ENCODE measurements at regions of chr14 and their contacts with region 1.

Region 1: GRCh38 chr14:101475456-101476257 is 85.6 kb upstream of the DIO3 start:
- DNase-seq: peak; percentile 61
- H3K4me3 ChIP-seq: no peak overlapping the region
- H3K27ac ChIP-seq: peak overlapping the region; percentile 83 to 86
- H3K4me1 ChIP-seq: peaks cover 24% of the 10 kb centered on the region
- H3K27me3 ChIP-seq: no peaks in the 10 kb centered on the region
- CTCF ChIP-seq: no peak
- POLR2A ChIP-seq: no peak

Region 2: DNA sequence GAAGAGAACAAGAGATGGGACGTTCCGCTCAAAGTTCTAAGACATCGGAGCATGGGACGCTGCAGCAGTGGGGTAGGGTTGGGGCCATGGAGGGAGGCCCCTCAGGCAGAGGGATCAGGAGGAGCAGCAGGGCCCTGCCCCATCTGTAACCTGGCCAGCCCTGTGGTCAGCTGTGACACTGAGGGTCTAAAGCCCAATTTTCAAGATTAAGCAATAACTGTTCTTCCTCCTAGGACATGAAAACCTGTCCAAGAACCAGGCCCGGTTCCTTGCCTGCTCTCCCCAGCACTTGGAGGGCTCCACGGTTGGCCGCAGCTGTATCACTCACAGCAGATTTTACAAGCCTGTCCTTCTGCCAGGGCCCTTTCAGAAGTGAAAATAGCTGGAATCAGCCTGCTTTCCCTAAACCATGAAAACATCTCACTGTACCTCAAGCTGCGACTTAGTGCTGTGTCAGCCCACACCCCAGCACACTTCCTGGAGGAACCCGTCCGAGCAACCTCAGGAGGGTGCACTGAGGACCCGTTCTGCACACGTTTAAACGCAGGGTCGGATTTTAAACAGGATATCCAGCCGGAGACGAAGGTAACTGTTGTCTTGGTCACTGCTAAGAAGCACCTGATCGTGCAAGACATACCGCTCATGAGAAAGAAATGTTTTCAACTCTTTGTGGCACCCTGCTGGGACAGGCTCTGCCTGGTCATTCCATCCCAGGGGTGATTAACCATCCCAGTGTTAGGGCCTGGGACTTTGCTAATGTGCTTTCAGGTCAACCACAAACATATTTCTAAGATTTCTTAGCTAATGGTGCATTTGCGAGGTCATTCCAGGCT is 116.2 kb before region 1 on chr14:
- intact Hi-C with region 1: loop called (anchors 10 kb)
- DNase-seq: peak; percentile 78
- H3K4me3 ChIP-seq: no peak overlapping the region
- H3K27ac ChIP-seq: peak overlapping the region; percentile 63 to 67
- H3K4me1 ChIP-seq: peaks cover 37% of the 10 kb centered on the region
- H3K27me3 ChIP-seq: no peaks in the 10 kb centered on the region
- CTCF ChIP-seq: no peak
- POLR2A ChIP-seq: no peak

Region 3: GRCh38 chr14:101398011-101398410 is 77.6 kb before region 1 on chr14:
- intact Hi-C with region 1: no loop called
- DNase-seq: no peak
- H3K4me3 ChIP-seq: no peak overlapping the region
- H3K27ac ChIP-seq: no peak overlapping the region
- H3K4me1 ChIP-seq: no peaks in the 10 kb centered on the region
- H3K27me3 ChIP-seq: no peaks in the 10 kb centered on the region
- CTCF ChIP-seq: no peak
- POLR2A ChIP-seq: no peak

Region 4: GRCh38 chr14:101426466-101426865 is 49.2 kb before region 1 on chr14:
- intact Hi-C with region 1: no loop called
- DNase-seq: no peak
- H3K4me3 ChIP-seq: no peak overlapping the region
- H3K27ac ChIP-seq: no peak overlapping the region
- H3K4me1 ChIP-seq: no peaks in the 10 kb centered on the region
- H3K27me3 ChIP-seq: no peaks in the 10 kb centered on the region
- CTCF ChIP-seq: no peak
- POLR2A ChIP-seq: no peak

Measured in testis (tissue), 5 donors.